ENCODE measurements at regions of chr9 and their contacts with region 1.

Region 1: DNA sequence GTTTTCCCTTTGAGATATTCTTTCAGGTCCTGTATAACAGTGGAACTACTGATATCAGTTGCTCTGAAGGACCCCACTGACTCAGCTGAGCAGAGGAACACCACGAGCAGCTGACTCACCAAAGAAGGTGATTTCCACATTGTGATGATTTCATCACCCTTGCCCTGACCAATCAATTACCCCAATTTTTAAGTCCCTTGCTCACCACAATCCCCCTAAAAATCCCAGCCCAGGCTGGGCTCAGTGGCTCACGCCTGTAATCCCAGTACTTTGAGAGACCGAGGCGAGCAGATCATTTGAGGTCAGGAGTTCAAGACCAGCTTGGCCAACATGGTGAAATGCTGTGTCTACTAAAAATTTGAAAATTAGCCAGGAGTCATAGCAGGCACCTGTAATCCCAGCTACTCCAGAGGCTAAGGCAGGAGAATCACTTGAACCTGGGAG is 125.3 kb upstream of the ABCA1 start:
- DNase-seq: peak; percentile 89
- H3K4me3 Mint-ChIP-seq: no peak overlapping the region
- H3K27ac Mint-ChIP-seq: peak overlapping the region; percentile 88
- H3K4me1 Mint-ChIP-seq: peaks cover 42% of the 10 kb centered on the region
- H3K27me3 Mint-ChIP-seq: no peaks in the 10 kb centered on the region

Region 2: DNA sequence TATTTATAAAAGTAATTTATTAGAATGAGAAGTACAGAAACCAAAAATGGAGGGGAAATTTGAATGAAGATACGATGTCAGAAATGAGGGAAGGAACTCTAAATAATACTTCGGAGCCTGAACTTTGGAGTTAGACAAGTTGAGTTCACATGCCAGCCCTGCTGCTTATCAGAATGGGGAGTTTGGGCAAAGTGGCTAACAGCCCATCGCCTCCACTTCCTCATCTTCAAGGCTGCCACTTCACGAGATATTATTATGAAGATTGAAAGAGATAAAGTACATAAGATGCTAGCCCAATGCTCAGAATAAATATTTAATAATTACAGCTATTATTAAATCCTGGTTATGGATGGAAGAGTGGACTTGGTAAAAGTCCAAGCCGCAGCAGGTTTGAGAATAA is 69.1 kb before region 1 on chr9:
- CTCF ChIA-PET with region 1: no interaction called
- intact Hi-C with region 1: loop called (anchors 1 kb)
- DNase-seq: no peak
- H3K4me3 Mint-ChIP-seq: no peak overlapping the region
- H3K27ac Mint-ChIP-seq: peak overlapping the region; percentile 94
- H3K4me1 Mint-ChIP-seq: peaks cover 70% of the 10 kb centered on the region
- H3K27me3 Mint-ChIP-seq: peaks cover 8% of the 10 kb centered on the region

Region 3: GRCh38 chr9:105064315-105065097 is 11.3 kb after region 1 on chr9:
- CTCF ChIA-PET with region 1: interaction called, 3 read pairs
- intact Hi-C with region 1: loop called (anchors 1 kb)
- DNase-seq: peak; percentile 19
- H3K4me3 Mint-ChIP-seq: no peak overlapping the region
- H3K27ac Mint-ChIP-seq: no peak overlapping the region
- H3K4me1 Mint-ChIP-seq: peaks cover 24% of the 10 kb centered on the region
- H3K27me3 Mint-ChIP-seq: peaks cover 2% of the 10 kb centered on the region

Region 4: GRCh38 chr9:105114964-105115728 is 61.9 kb after region 1 on chr9:
- CTCF ChIA-PET with region 1: no interaction called
- intact Hi-C with region 1: loop called (anchors 1 kb)
- DNase-seq: peak; percentile 68
- H3K4me3 Mint-ChIP-seq: no peak overlapping the region
- H3K27ac Mint-ChIP-seq: no peak overlapping the region
- H3K4me1 Mint-ChIP-seq: peaks cover 28% of the 10 kb centered on the region
- H3K27me3 Mint-ChIP-seq: no peaks in the 10 kb centered on the region

Region 5: DNA sequence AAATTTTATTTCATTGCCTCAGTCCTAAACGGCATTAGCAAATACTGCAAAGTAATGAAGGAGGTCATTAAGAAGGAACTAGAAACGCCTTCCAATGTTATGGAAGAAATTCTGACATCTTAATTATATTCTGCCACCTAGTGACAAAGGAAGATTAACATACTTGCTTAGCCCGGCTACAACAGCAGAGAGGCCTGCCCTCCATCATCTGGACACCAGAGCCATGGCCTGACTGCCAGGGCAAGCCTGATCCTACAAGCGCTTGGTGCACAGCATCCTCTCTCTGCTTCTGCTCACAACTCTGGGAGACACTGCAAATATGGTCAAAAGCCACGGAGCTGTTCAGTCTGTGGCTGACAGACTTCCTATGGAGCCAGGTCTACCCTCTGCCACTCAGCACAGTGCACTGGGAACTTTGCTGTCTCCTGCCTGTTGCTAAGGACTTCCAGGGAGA is 103.9 kb after region 1 on chr9:
- CTCF ChIA-PET with region 1: no interaction called
- intact Hi-C with region 1: loop called (anchors 1 kb)
- DNase-seq: peak; percentile 46
- H3K4me3 Mint-ChIP-seq: no peak overlapping the region
- H3K27ac Mint-ChIP-seq: no peak overlapping the region
- H3K4me1 Mint-ChIP-seq: peaks cover 16% of the 10 kb centered on the region
- H3K27me3 Mint-ChIP-seq: no peaks in the 10 kb centered on the region

Region 6: GRCh38 chr9:105694190-105694847 is 641.1 kb after region 1 on chr9 and contains the start of gene TMEM38B:
- CTCF ChIA-PET with region 1: no interaction called
- intact Hi-C with region 1: loop called (anchors 1 kb)
- DNase-seq: peak; percentile 76
- H3K4me3 Mint-ChIP-seq: peak within 1 kb of the TSS; percentile 90
- H3K27ac Mint-ChIP-seq: peak within 1 kb of the TSS; percentile 75
- H3K4me1 Mint-ChIP-seq: peaks cover 33% of the 10 kb centered on the region
- H3K27me3 Mint-ChIP-seq: peaks cover 10% of the 10 kb centered on the region
- total RNA-seq, gene TMEM38B: 17.6 TPM